Dendritic cell treated with granulocyte-macrophage colony-stimulating factor and Interleukin-4, amounts not matched to agents 40 ng/mL and 50 ng/mL, for 4 days (primary cell): ENCODE measurements at regions of chr3 and their contacts with region 1.

Region 1: DNA sequence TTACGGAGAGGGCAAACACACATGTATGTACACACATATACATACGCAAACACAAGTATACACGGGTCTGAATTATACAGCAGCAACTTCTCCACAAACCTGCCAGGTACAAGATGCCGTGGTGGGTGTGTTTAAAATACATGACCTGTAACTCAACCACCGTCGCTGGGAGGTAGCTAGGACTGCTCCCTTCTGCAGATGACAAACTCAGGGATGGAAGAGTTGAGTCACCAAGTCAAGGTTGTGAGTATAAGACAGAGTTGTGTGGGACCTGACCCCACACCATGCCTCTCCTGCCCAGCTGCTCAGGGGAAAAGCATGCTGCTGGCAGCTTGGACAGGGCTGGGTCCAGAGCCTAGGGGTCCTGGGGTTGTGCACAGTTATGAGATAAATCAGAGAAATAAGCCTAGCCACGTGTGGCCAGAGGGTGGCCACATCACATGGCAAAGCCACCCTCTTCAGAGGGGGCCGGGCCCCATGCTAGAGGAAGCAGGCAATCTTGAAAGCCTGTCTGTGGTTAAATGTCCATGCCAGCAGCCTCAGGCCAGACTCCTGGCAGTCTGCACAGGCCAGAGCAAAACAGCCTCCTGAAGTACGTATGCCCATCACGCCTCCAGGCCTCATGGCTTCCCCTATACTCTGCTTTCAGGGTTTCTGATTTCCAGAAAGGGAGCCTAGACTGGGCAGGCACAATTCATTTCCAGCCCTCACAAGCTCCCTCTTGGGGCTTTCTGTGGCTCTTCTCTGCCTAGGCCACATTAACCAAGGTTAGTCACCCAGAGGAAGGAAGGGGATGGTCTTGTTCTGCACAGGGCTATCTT is 107.7 kb upstream of the RPL32 start:
- H3K4me3 Mint-ChIP-seq: no peak overlapping the region
- H3K27ac Mint-ChIP-seq: no peak overlapping the region
- H3K4me1 Mint-ChIP-seq: peaks cover 76% of the 10 kb centered on the region
- H3K27me3 Mint-ChIP-seq: no peaks in the 10 kb centered on the region

Region 2: GRCh38 chr3:12967606-12968351 is 18.7 kb after region 1 on chr3:
- intact Hi-C with region 1: loop called (anchors 2 kb)
- H3K4me3 Mint-ChIP-seq: peak overlapping the region; percentile 89
- H3K27ac Mint-ChIP-seq: peak overlapping the region; percentile 85
- H3K4me1 Mint-ChIP-seq: peaks cover 83% of the 10 kb centered on the region
- H3K27me3 Mint-ChIP-seq: no peaks in the 10 kb centered on the region

Region 3: DNA sequence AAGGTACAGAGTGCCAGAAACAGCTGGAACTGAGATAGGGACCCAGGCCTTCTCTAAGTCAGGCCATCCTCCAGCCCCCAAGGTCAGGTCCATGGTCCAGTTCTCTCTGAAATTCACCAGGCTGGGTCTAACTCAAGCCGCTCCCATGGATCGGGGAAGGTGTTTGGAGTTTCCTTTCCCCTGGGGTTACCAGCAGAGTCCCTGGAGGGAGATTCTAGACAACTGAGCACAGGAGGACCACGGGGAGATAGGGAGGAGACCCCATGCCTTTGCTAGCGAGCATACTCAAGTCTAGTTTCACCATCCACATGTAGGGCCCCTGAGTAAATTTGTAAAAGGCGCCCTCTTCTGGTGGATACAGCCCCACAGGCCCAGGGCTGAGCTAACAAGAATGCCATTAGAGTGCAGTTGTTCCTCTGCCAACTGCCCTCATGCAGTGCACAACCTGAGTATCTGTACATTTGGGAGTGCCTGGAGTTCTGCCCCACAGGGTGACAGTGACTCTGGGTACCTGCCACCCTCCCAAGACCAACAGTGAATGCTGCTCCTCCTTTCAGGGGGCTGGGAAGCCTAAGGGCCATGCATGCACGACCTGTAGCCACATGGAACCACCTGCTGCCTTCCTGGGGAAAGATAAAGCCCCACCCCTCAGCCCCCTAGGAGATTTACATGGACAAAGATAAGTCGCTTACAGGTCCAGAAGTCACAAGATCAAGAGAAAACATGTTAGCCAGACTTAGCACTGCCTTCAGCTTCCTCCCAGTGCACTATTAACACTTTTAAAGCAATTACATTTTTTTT is 35.1 kb after region 1 on chr3:
- intact Hi-C with region 1: loop called (anchors 5 kb)
- H3K4me3 Mint-ChIP-seq: no peak overlapping the region
- H3K27ac Mint-ChIP-seq: no peak overlapping the region
- H3K4me1 Mint-ChIP-seq: peaks cover 54% of the 10 kb centered on the region
- H3K27me3 Mint-ChIP-seq: no peaks in the 10 kb centered on the region